HCT116 (cell line): ENCODE measurements at regions of chr12 and their contacts with region 1.

Region 1: DNA sequence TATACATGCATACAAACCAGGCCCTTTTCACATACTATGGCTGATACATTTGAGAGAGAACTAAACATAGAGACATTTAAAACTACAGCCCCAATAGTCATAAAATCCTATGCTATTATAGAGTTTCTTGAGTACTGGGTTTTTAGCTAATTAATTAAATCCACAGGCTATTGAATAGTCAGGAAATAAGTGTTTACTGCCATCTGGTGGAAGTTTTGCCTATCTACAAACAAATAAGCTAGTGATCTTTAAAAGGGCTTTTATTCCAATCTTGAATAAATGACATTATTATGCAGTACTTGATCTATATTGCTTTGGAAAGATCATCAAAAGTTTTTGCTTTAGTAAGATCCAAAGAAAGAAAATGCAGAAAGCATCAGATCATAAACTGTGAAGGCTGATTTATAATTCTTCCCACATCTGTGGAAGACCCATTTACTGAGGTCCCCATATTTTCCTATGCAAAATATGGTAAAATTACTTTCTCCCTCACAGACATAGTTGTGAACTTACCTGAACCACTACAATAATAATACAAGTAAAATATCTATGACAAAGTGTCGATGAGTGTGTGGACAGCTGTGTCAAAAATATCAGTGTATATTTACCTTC is 131.3 kb downstream of the ITPR2 start:
- DNase-seq: peak; percentile 28
- ATAC-seq: peak; percentile 66; the same call in 1 of the 2 replicates
- H3K4me3 ChIP-seq: no peak overlapping the region
- H3K27ac ChIP-seq: no peak overlapping the region
- H3K4me1 ChIP-seq: no peaks in the 10 kb centered on the region
- H3K27me3 ChIP-seq: no peaks in the 10 kb centered on the region
- CTCF ChIP-seq: peak; percentile 44 to 75 (median 46); a peak in 5 of 6 replicates
- POLR2A ChIP-seq: no peak
- RAD21 ChIP-seq: peak; percentile 76

Region 2: GRCh38 chr12:26097046-26097878 is 604.4 kb before region 1 on chr12:
- CTCF ChIA-PET with region 1: interaction called, 15 read pairs
- POLR2A ChIA-PET with region 1: no interaction called
- RAD21 ChIA-PET with region 1: no interaction called
- intact Hi-C with region 1: loop called (anchors 2 kb)
- DNase-seq: peak; percentile 53
- ATAC-seq: peak; percentile 99
- H3K4me3 ChIP-seq: no peak overlapping the region
- H3K27ac ChIP-seq: no peak overlapping the region
- H3K4me1 ChIP-seq: peaks cover 9 to 12% of the 10 kb centered on the region in 2 experiments; a peak in 3 of 4 replicates
- H3K27me3 ChIP-seq: no peaks in the 10 kb centered on the region
- CTCF ChIP-seq: peak; percentile 79 to 94 (median 87)
- POLR2A ChIP-seq: no peak
- RAD21 ChIP-seq: peak; percentile 92

Region 3: DNA sequence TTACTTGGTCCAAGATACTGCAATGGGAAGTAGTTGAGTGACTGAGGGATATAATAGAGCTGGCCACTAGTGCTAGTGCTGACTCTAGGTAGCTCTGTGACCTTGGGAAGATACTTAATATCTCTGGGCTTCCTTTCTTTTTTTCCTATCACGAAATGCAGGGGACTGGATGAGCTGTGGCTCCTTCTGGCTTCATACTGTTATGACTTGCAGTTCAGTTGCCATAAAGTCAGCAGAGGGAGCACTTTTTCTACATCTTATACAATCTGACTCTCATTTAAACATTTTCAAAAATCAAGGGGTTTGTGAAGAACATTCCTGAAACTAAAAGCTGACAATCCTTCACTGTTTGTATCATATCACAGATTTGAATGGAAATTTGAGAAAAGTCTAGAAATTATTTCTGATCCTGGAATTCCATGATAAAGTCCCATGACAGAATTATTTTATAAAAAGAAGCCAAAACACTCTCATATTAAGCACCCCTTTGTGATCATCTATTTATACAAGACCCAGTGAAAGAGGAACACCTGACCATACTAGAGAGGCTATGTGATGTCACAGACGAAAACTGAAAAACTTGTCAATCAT is 582.2 kb before region 1 on chr12:
- CTCF ChIA-PET with region 1: interaction called, 26 read pairs
- POLR2A ChIA-PET with region 1: no interaction called
- RAD21 ChIA-PET with region 1: interaction called, 4 to 5 read pairs
- intact Hi-C with region 1: loop called (anchors 2 kb)
- DNase-seq: peak; percentile 51
- ATAC-seq: peak; percentile 58
- H3K4me3 ChIP-seq: no peak overlapping the region
- H3K27ac ChIP-seq: no peak overlapping the region
- H3K4me1 ChIP-seq: peaks cover 13 to 38% of the 10 kb centered on the region in 2 experiments
- H3K27me3 ChIP-seq: peaks cover 5% of the 10 kb centered on the region; the same call in 1 of the 2 replicates
- CTCF ChIP-seq: peak; percentile 53 to 75 (median 62)
- POLR2A ChIP-seq: no peak
- RAD21 ChIP-seq: peak; percentile 77

Region 4: GRCh38 chr12:26434299-26435068 is 267.2 kb before region 1 on chr12:
- CTCF ChIA-PET with region 1: interaction called, 5 read pairs
- POLR2A ChIA-PET with region 1: no interaction called
- RAD21 ChIA-PET with region 1: no interaction called
- intact Hi-C with region 1: loop called (anchors 2 kb)
- DNase-seq: peak; percentile 61
- ATAC-seq: peak; percentile 92
- H3K4me3 ChIP-seq: no peak overlapping the region
- H3K27ac ChIP-seq: no peak overlapping the region
- H3K4me1 ChIP-seq: no peaks in the 10 kb centered on the region
- H3K27me3 ChIP-seq: no peaks in the 10 kb centered on the region
- CTCF ChIP-seq: peak; percentile 72 to 91 (median 87)
- POLR2A ChIP-seq: no peak
- RAD21 ChIP-seq: peak; percentile 75

Region 5: GRCh38 chr12:26629864-26630263 is 71.8 kb before region 1 on chr12:
- CTCF ChIA-PET with region 1: interaction called, 26 read pairs
- POLR2A ChIA-PET with region 1: no interaction called
- RAD21 ChIA-PET with region 1: interaction called, 4 to 8 read pairs
- intact Hi-C with region 1: loop called (anchors 5 kb)
- DNase-seq: no peak
- ATAC-seq: no peak
- H3K4me3 ChIP-seq: no peak overlapping the region
- H3K27ac ChIP-seq: no peak overlapping the region
- H3K4me1 ChIP-seq: no peaks in the 10 kb centered on the region
- H3K27me3 ChIP-seq: no peaks in the 10 kb centered on the region
- CTCF ChIP-seq: peak in 2 of 3 experiments; percentile 26 to 36; a peak in 3 of 6 replicates
- POLR2A ChIP-seq: no peak
- RAD21 ChIP-seq: peak; percentile 53

Region 6: DNA sequence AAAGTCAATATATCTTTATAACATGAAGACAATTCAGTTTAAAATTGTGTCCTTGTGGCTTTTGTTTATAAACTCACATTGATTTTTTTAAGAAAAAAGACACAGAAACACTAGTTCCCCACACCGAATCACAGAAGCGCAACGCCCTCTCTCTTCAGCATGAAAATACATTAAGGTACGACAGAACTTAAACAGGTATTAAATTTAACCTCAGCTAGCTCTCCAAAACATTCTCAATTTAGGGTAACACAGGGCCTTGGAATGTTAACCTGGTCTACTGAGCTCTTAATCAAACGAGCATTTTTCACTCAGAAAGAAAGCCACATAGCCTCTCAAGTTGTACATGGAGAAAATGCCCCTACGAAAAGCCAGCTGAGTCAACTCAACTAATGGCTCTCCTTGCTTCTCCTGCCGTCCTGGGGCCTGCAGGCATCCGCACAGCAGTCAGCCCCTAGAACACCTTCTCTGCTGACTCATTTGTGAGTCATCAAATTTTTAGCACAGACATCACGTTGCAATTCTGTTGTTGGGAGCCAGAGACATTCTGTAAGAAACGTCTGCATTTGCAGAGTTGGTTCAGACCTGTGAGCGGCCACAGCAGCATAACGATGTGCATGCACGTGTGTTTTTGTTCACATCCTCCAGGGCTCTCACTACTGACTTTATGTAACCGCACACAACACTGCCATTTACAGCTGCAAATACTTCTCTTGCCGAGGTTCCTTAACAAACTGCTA is 10.3 kb before region 1 on chr12:
- CTCF ChIA-PET with region 1: interaction called, 30 read pairs
- POLR2A ChIA-PET with region 1: no interaction called
- RAD21 ChIA-PET with region 1: interaction called in 1 of 2 experiments, 5 read pairs
- intact Hi-C with region 1: no loop called
- DNase-seq: peak; percentile 81
- ATAC-seq: peak; percentile 98
- H3K4me3 ChIP-seq: peak overlapping the region; percentile 13 to 43
- H3K27ac ChIP-seq: peak overlapping the region; percentile 0; the same call in 1 of the 2 replicates
- H3K4me1 ChIP-seq: peaks cover 5 to 23% of the 10 kb centered on the region in 2 experiments
- H3K27me3 ChIP-seq: no peaks in the 10 kb centered on the region
- CTCF ChIP-seq: no peak
- POLR2A ChIP-seq: no peak
- RAD21 ChIP-seq: no peak